ENCODE measurements at regions of chr3 and their contacts with region 1.

Region 1: GRCh38 chr3:115169808-115170207 is 22.7 kb upstream of the ZBTB20 start:
- DNase-seq: no peak
- ATAC-seq: no peak
- H3K4me3 ChIP-seq: no peak overlapping the region
- H3K27ac ChIP-seq: no peak overlapping the region
- H3K4me1 ChIP-seq: no peaks in the 10 kb centered on the region
- H3K27me3 ChIP-seq: no peaks in the 10 kb centered on the region
- CTCF ChIP-seq: peak in 8 of 9 donors; percentile 34 to 66 (median 49)

Region 2: DNA sequence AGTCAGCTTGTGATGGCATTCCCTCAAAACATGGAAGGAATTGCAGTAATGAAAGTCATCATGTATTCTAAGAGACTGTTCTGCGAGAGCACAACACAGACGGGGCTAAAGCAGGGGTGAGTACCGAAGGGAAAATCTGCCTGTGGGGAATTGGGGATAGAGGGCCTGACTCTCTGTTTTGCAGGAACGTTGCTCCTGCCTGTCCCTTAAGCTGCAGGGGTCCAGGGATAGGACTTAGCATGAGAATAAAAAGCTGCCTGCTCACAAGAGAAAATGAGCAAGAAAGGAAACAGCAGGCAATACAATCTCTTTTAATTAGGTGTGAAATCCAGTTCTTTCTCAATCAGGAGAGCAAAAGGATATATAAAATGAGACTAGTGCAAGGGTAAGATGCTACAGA is 813.7 kb before region 1 on chr3:
- intact Hi-C with region 1: loop called in 4 of 10 experiments (anchors 10 kb)
- DNase-seq: no peak
- ATAC-seq: no peak
- H3K4me3 ChIP-seq: no peak overlapping the region
- H3K27ac ChIP-seq: no peak overlapping the region
- H3K4me1 ChIP-seq: peaks cover 0 to 21% (median 0%) of the 10 kb centered on the region in 9 donors
- H3K27me3 ChIP-seq: no peaks in the 10 kb centered on the region
- CTCF ChIP-seq: no peak

Region 3: GRCh38 chr3:114362815-114363214 is 807.0 kb before region 1 on chr3:
- intact Hi-C with region 1: loop called in 4 of 10 experiments (anchors 10 kb)
- DNase-seq: no peak
- ATAC-seq: peak in 7 of 8 donors; percentile 39 to 77 (median 56)
- H3K4me3 ChIP-seq: no peak overlapping the region
- H3K27ac ChIP-seq: peak overlapping the region; percentile 18 to 80 (median 56)
- H3K4me1 ChIP-seq: peaks cover 5 to 55% (median 34%) of the 10 kb centered on the region in 9 donors
- H3K27me3 ChIP-seq: no peaks in the 10 kb centered on the region
- CTCF ChIP-seq: peak; percentile 14 to 68 (median 51)

Region 4: DNA sequence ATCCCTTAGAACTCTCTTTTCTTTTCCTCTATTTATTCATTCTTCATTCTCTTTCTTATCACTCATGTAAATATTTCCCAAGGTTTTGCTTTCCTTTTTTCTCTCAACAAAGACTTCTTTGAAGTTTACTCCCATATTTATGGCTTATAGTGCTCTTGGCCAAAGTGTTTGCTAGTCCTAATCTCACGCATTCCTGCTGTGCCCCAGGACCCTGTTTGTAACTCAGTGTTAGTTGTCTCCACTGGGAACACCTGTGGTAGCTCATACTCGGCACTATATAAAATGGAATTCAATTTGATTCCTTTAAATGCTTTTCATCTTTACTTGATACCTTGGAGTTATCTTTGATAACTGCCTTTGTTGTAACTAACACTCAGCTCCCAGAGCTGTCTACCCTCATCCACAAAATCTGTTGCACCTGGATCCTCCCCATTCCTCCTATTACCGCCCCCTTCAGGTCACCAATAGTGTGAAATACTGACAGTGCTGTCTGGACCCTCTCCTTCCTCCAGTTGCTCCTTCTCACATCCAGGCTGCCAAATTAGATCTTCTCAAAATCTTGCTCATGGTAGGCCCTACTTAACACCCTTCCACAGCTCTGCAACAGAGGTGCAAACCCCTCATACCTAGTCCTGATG is 799.2 kb before region 1 on chr3:
- intact Hi-C with region 1: loop called in 4 of 10 experiments (anchors 10 kb)
- DNase-seq: no peak
- ATAC-seq: peak in 1 of 8 donors; percentile 39
- H3K4me3 ChIP-seq: no peak overlapping the region
- H3K27ac ChIP-seq: no peak overlapping the region
- H3K4me1 ChIP-seq: peaks cover 4 to 35% (median 29%) of the 10 kb centered on the region in 9 donors
- H3K27me3 ChIP-seq: no peaks in the 10 kb centered on the region
- CTCF ChIP-seq: peak in 1 of 9 donors; percentile 12

Region 5: GRCh38 chr3:114827495-114827894 is 342.3 kb before region 1 on chr3:
- intact Hi-C with region 1: loop called in 8 of 10 experiments (anchors 5 to 10 kb)
- DNase-seq: peak in 1 of 2 donors; percentile 24
- ATAC-seq: peak in 7 of 8 donors; percentile 62 to 81 (median 76)
- H3K4me3 ChIP-seq: no peak overlapping the region
- H3K27ac ChIP-seq: no peak overlapping the region
- H3K4me1 ChIP-seq: peaks cover 0 to 7% (median 0%) of the 10 kb centered on the region in 9 donors
- H3K27me3 ChIP-seq: no peaks in the 10 kb centered on the region
- CTCF ChIP-seq: peak in 8 of 9 donors; percentile 47 to 82 (median 73)

Region 6: DNA sequence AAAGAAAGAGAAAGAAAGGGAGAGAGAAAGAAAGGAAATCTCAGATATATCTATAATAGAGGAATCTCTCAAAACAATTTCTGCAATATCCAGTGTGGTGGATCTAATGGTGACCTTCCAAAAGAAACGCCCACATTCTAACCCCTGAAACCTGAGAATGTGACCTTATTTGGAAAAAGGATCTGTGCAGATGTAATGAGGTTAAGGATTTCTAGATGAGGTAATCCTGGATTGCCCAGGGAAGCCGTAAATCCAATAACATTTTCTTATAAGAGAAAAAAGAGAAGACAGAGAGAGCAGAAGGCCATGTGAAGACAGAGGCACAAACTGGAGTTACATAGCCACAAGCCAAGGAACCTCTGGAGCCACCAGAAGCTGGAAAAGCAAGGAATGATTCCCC is 330.3 kb before region 1 on chr3:
- intact Hi-C with region 1: loop called in 2 of 10 experiments (anchors 10 kb)
- DNase-seq: no peak
- ATAC-seq: no peak
- H3K4me3 ChIP-seq: no peak overlapping the region
- H3K27ac ChIP-seq: no peak overlapping the region
- H3K4me1 ChIP-seq: peaks cover 0 to 8% (median 3%) of the 10 kb centered on the region in 9 donors
- H3K27me3 ChIP-seq: no peaks in the 10 kb centered on the region
- CTCF ChIP-seq: no peak